Calu3 (cell line): ENCODE measurements at regions of chr9 and their contacts with region 1.

Region 1: GRCh38 chr9:86126998-86127972 is 27.9 kb upstream of the GOLM1 start:
- DNase-seq: peak; percentile 93
- H3K4me3 Mint-ChIP-seq: peak overlapping the region; percentile 50
- H3K27ac Mint-ChIP-seq: peak overlapping the region; percentile 93
- H3K4me1 Mint-ChIP-seq: peaks cover 46% of the 10 kb centered on the region
- H3K27me3 Mint-ChIP-seq: no peaks in the 10 kb centered on the region
- CTCF ChIP-seq: no peak

Region 2: GRCh38 chr9:86079865-86080469 is 47.3 kb before region 1 on chr9:
- CTCF ChIA-PET with region 1: no interaction called
- intact Hi-C with region 1: no loop called
- DNase-seq: no peak
- H3K4me3 Mint-ChIP-seq: peak overlapping the region; percentile 53
- H3K27ac Mint-ChIP-seq: peak overlapping the region; percentile 75
- H3K4me1 Mint-ChIP-seq: peaks cover 29% of the 10 kb centered on the region
- H3K27me3 Mint-ChIP-seq: no peaks in the 10 kb centered on the region
- CTCF ChIP-seq: no peak

Region 3: DNA sequence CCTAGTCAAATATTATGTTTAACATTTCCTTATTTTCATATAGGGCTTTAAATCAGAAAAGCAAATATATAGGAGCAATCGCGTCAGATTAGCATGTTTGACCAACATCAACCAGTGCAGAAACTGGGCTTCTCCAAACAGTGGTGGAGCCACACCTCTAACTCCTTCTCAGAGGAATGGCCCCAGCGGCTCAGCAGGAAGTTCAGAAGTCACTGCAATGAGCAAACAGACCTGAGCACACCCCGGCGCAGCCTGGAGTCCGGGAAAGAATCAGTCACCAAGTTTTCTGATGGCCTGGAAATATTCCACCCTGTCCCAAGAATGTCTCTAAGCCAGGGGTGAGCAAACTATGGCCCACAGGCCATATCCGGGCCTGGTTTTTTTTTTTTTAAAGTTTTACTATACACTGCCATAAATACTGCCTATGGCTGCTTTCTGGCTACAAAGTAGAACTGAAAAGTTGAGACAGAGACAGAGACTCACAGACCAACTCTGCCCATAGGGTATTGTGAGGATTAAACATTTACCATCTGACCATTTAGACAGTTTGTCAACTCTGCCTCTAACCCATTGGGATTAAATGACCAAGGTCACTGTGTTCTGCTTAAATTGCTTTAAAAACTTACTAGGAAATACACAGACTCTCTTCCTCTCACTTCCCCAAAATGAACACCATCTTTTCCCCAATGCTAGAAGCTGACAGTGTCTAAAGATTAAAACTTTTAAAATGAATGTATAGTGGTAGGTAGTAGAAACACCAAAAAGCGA is 33.3 kb before region 1 on chr9:
- CTCF ChIA-PET with region 1: no interaction called
- intact Hi-C with region 1: loop called (anchors 5 kb)
- DNase-seq: peak; percentile 77
- H3K4me3 Mint-ChIP-seq: peak overlapping the region; percentile 61
- H3K27ac Mint-ChIP-seq: peak overlapping the region; percentile 90
- H3K4me1 Mint-ChIP-seq: peaks cover 31% of the 10 kb centered on the region
- H3K27me3 Mint-ChIP-seq: no peaks in the 10 kb centered on the region
- CTCF ChIP-seq: no peak